B cell (primary cell): ENCODE measurements at regions of chr3 and their contacts with region 1.

Region 1: DNA sequence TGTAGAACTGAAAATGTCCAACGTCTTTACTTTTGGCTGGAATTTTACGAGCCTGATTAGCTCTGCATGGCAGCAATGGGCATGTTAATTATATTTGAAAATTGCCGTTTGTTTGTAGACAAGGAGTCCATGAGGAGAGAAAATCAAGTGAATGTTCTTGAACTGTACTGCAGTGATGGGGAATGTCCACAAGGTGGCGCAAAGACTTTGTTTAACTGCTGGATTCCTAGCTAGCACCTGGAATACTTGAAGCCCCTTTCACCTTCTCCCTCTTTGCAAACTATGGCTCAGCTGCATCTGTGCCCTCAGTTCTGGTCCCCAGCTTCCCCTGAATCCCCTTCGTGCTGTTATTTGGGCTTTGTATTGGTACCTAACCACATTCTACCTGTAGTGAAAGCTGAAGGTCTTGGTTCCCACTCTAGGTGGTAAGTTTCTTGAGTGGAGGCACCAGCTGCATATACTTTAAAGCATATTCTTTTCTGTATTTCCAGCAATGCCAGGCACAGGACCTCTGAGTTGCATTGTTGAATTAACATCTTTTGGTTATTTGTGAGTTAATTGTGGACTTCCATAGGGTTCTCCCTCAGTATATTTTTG is 25.3 kb downstream of the EXOG start:
- DNase-seq: peak; percentile 75
- ATAC-seq: peak; percentile 56
- H3K4me3 ChIP-seq: no peak overlapping the region
- H3K4me3 Mint-ChIP-seq: no peak overlapping the region
- H3K27ac ChIP-seq: no peak overlapping the region
- H3K27ac Mint-ChIP-seq: no peak overlapping the region
- H3K4me1 ChIP-seq: peaks cover 7 to 12% of the 10 kb centered on the region in 2 donors
- H3K4me1 Mint-ChIP-seq: peaks cover 18% of the 10 kb centered on the region
- H3K27me3 ChIP-seq: no peaks in the 10 kb centered on the region
- H3K27me3 Mint-ChIP-seq: no peaks in the 10 kb centered on the region
- CTCF ChIP-seq: peak; percentile 95

Region 2: DNA sequence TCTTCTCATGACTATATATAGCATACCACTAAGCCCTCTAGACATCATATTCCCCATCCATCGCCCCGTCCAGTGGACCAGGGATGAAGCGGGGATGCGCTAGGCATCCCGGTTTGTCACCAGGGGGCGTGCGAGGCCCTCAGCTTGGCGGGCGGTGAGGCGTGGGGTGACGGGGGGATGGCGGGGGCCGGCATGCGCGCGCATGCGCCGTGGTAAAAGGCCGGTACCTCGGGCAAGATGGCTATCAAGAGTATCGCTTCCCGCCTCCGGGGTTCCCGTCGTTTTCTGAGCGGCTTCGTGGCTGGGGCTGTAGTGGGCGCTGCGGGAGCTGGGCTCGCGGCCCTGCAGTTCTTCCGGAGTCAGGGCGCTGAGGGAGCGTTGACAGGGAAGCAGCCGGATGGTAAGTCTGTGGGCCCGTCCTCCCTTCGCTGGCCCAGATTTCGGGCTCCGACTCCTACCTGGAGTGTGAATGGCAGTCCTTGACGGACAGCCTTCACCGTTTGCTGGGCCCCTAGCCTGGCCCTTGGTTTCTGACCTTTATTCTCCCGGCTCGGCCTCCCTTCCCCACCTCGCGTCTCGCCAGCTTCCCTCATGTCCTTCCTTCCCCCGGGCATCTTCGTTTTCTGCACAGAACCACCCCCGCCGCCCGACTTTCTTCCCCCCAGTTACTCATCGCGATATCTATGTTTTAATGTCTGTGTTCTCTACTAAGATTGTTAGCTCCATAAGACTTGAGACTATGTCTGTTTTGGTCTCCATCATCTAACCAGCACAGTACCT is 25.2 kb before region 1 on chr3 and contains the start of gene EXOG:
- CTCF ChIA-PET with region 1: interaction called, 22 read pairs
- POLR2A ChIA-PET with region 1: no interaction called
- intact Hi-C with region 1: no loop called
- DNase-seq: peak; percentile 95
- ATAC-seq: peak; percentile 96
- H3K4me3 ChIP-seq: peak within 1 kb of the TSS; percentile 79 to 95 (median 90)
- H3K4me3 Mint-ChIP-seq: peak within 1 kb of the TSS; percentile 95
- H3K27ac ChIP-seq: peak within 1 kb of the TSS; percentile 59 to 81
- H3K27ac Mint-ChIP-seq: peak within 1 kb of the TSS; percentile 83
- H3K4me1 ChIP-seq: peaks cover 6 to 12% of the 10 kb centered on the region in 2 donors
- H3K4me1 Mint-ChIP-seq: peaks cover 19% of the 10 kb centered on the region
- H3K27me3 ChIP-seq: no peaks in the 10 kb centered on the region
- H3K27me3 Mint-ChIP-seq: no peaks in the 10 kb centered on the region
- CTCF ChIP-seq: peak; percentile 92
- total RNA-seq, gene EXOG: 36.8 and 38.3 TPM in 2 replicates

Region 3: GRCh38 chr3:38507120-38507519 is 14.4 kb before region 1 on chr3:
- CTCF ChIA-PET with region 1: interaction called, 31 read pairs
- POLR2A ChIA-PET with region 1: no interaction called
- intact Hi-C with region 1: no loop called
- DNase-seq: no peak
- ATAC-seq: no peak
- H3K4me3 ChIP-seq: no peak overlapping the region
- H3K4me3 Mint-ChIP-seq: no peak overlapping the region
- H3K27ac ChIP-seq: no peak overlapping the region
- H3K27ac Mint-ChIP-seq: no peak overlapping the region
- H3K4me1 ChIP-seq: no peaks in the 10 kb centered on the region
- H3K4me1 Mint-ChIP-seq: no peaks in the 10 kb centered on the region
- H3K27me3 ChIP-seq: no peaks in the 10 kb centered on the region
- H3K27me3 Mint-ChIP-seq: no peaks in the 10 kb centered on the region
- CTCF ChIP-seq: no peak

Region 4: DNA sequence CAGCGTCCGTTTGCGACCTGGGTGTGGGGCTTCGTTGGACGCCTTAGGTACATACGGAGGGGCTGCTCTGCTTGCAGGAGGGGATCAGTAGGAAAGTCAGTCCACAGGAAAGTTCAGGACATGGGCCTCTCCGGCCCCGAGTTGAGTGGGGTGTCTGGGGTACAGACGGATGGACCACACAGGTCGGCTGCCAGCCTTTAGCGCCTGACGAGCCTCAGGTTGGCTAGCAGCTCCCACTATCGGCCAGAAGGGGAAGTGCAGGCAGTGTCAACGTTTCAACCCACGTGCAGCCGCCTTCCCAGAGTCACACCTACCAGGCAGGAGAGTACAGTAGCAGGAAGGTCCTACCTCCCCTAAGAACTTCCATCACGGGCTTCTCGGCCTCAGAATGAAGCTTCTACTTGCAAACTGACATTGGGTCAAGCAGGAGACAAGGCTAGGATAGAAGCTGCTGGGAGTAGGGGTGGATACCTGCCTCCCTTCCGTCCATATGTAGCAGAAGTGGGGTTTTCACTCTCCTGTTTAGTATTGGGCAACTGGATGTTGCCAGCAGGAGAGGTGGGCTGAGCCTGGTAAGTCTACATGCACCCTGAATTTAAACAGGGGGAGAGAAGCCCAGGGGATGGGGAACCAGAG is 129.8 kb after region 1 on chr3:
- CTCF ChIA-PET with region 1: interaction called, 20 read pairs
- POLR2A ChIA-PET with region 1: no interaction called
- intact Hi-C with region 1: loop called (anchors 2 kb)
- DNase-seq: peak; percentile 67
- ATAC-seq: peak; percentile 55
- H3K4me3 ChIP-seq: no peak overlapping the region
- H3K4me3 Mint-ChIP-seq: peak overlapping the region; percentile 23
- H3K27ac ChIP-seq: no peak overlapping the region
- H3K27ac Mint-ChIP-seq: no peak overlapping the region
- H3K4me1 ChIP-seq: peaks cover 13% of the 10 kb centered on the region in 2 donors
- H3K4me1 Mint-ChIP-seq: peaks cover 8% of the 10 kb centered on the region
- H3K27me3 ChIP-seq: peaks cover 0 to 58% (median 24%) of the 10 kb centered on the region in 4 experiments
- H3K27me3 Mint-ChIP-seq: peaks cover 25% of the 10 kb centered on the region
- CTCF ChIP-seq: peak; percentile 85

Region 5: GRCh38 chr3:39000008-39000450 is 478.5 kb after region 1 on chr3:
- CTCF ChIA-PET with region 1: interaction called, 22 read pairs
- POLR2A ChIA-PET with region 1: no interaction called
- intact Hi-C with region 1: loop called (anchors 1 kb)
- DNase-seq: peak; percentile 48
- ATAC-seq: peak; percentile 39
- H3K4me3 ChIP-seq: no peak overlapping the region
- H3K4me3 Mint-ChIP-seq: no peak overlapping the region
- H3K27ac ChIP-seq: no peak overlapping the region
- H3K27ac Mint-ChIP-seq: no peak overlapping the region
- H3K4me1 ChIP-seq: no peaks in the 10 kb centered on the region
- H3K4me1 Mint-ChIP-seq: no peaks in the 10 kb centered on the region
- H3K27me3 ChIP-seq: no peaks in the 10 kb centered on the region
- H3K27me3 Mint-ChIP-seq: peaks cover 27% of the 10 kb centered on the region
- CTCF ChIP-seq: peak; percentile 69

Region 6: GRCh38 chr3:39025222-39025970 is 503.9 kb after region 1 on chr3:
- CTCF ChIA-PET with region 1: interaction called, 7 read pairs
- POLR2A ChIA-PET with region 1: no interaction called
- intact Hi-C with region 1: loop called (anchors 1 kb)
- DNase-seq: no peak
- ATAC-seq: no peak
- H3K4me3 ChIP-seq: no peak overlapping the region
- H3K4me3 Mint-ChIP-seq: no peak overlapping the region
- H3K27ac ChIP-seq: no peak overlapping the region
- H3K27ac Mint-ChIP-seq: no peak overlapping the region
- H3K4me1 ChIP-seq: no peaks in the 10 kb centered on the region
- H3K4me1 Mint-ChIP-seq: no peaks in the 10 kb centered on the region
- H3K27me3 ChIP-seq: no peaks in the 10 kb centered on the region
- H3K27me3 Mint-ChIP-seq: peaks cover 12% of the 10 kb centered on the region
- CTCF ChIP-seq: no peak

Region 7: DNA sequence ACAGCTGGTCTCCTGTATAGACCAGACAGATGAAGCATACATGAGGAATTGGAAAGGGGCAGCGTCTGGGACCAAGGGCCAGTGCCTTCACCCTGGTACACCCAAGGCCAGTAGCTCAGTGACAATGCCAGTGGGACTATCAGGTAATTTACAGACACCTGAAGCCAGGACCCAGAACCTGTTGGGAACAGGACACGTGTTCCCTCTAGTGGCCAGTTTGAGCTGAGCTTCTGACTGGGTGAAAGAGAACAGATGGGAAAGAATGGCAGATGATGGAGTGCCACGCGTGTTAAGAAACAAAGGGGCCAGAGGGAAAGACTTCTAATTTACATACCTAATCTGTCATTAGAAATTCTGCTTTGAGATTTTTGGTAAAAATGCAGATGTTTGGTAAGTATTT is 856.6 kb after region 1 on chr3:
- CTCF ChIA-PET with region 1: interaction called, 12 read pairs
- POLR2A ChIA-PET with region 1: no interaction called
- intact Hi-C with region 1: no loop called
- DNase-seq: peak; percentile 63
- ATAC-seq: peak; percentile 60
- H3K4me3 ChIP-seq: no peak overlapping the region
- H3K4me3 Mint-ChIP-seq: no peak overlapping the region
- H3K27ac ChIP-seq: no peak overlapping the region
- H3K27ac Mint-ChIP-seq: no peak overlapping the region
- H3K4me1 ChIP-seq: peaks cover 6 to 7% of the 10 kb centered on the region in 2 donors
- H3K4me1 Mint-ChIP-seq: peaks cover 12% of the 10 kb centered on the region
- H3K27me3 ChIP-seq: peaks cover 0 to 2% (median 0%) of the 10 kb centered on the region in 4 experiments
- H3K27me3 Mint-ChIP-seq: no peaks in the 10 kb centered on the region
- CTCF ChIP-seq: peak; percentile 78